Posterior cingulate gyrus (tissue), 11 donors: ENCODE measurements at regions of chr14 and their contacts with region 1.

Region 1: GRCh38 chr14:61461808-61462275 is 140.5 kb downstream of the PRKCH start:
- DNase-seq: no peak

Region 2: DNA sequence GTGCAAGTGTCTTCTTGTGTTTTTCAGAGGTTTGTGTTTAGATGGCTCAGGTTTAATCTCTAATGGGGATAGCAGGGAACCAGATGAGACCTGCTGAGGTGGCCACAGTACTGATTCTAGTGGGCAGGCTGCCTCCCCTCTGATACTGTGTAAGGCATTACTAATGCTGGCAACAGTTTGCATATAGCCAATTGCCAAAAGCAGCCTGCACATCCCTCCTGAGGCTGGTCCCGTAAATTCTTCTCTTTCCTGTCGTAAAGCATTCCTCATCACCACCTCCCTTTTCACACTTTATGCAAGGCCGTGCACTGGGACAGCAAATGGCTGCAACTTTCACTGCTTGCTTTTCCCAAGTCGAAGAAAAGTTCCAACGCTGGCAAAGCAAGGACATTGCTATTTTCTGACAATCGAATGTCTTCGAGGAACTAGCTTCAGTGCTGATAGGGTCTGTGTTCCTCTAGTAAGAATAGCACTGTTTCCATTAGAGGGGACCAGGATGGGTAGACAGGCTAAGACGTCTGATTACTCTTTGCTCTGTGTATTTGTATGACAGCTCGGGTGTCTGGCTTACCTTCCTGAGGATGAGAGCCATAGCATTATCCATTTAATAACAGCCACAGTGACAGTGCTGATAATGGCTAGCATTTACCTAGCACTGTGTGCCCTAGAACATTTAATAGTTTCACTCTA is 55.3 kb after region 1 on chr14:
- intact Hi-C with region 1: no loop called
- DNase-seq: no peak

Region 3: DNA sequence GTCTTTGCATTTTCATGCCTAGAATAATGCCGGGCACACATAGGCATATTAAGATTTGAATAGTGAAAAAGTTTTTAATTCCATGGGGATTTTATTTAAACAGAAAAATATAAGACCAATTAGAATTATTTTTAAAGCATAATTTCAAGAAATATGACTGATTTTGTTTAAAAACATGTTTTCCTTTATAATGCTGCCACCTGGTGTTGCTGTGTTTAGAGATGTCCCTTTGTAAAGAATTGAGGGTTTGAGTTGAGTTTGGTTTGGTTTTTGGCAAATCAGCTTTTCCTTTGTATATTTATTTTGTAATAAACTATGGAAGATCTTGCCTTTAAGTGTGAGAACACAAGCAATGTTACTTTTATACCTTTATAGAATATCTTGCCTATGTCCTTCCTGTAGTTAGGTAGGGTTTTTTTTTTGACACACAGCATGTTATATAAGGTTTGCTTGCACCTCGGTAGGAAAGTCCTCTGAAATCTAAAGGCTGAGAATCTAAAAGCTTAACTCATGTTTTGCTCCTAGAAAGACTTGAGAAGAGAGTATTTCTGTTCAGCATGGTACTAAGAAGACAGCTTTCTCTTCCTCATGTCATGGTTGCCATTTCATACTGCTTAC is 269.0 kb after region 1 on chr14:
- intact Hi-C with region 1: loop called (anchors 2 kb)
- DNase-seq: no peak

Region 4: DNA sequence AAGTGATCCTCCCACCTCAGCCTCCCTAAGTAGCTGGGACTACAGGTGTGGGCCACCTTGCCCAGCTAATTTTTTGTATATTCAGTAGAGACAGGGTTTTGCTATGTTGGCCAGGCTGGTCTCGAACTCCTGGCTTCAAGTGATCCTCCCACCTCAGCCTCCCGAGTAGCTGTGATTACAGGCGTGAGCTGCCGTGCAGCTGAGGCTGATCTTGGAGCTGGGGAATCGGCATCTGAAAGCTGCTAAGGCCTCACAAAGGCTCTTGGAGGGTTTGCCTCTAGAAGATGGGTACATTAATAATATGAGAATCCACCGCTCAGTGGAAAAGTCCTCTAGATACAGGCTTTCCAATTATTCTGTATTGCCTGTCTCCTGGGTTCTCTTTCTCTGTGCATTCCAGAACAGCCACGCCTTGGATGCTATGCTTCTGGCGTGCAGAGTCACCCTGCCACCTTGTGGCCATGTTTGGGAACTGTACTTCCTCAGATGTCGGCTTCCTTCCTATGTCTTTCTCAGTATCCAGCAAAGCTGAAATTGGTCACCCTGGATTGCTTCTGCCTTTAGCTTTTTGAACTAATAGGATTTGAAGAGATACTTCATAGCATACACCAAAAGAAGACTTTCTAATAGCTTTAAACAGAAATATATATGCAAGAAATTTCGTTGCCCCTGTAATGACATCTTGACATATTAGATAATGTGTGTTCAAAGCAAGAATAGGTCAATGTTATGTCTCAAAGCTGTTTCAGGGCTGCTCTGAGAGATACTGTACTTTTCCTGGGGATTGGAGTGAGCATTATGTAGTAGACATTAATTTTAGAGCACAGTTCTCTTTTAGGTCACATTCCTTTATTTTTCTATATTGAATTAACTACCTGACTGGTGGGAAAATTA is 375.7 kb after region 1 on chr14:
- intact Hi-C with region 1: loop called (anchors 1 kb)
- DNase-seq: peak; percentile 57 to 97 (median 81)

Region 5: DNA sequence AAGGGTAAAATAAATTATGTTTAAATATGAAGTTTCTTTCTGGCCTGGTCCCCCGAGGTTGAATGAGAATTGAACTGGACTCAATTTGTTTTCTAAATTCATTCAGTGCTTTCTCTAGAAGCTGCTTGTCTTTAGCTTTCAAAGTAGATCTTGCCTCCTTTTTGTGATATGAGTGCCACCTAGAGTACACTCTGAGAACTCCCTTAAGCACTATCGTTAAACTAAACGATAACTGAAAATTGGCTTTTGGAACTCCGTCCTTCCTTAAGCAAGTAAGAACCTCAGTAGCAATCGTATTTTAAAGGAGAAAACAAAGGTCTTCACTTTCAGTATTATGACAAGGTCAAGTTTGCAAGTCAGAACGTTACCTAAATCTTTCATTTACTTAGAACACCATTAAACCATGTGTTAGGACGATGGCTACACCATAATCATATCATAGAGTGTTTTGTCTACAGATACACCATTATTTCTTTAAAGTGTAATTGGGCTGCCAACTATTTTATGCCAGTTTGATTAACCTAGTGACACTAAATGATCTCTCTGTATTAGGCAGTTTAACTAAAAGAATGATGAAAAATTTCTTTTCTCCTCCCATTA is 665.1 kb after region 1 on chr14:
- intact Hi-C with region 1: loop called (anchors 5 kb)
- DNase-seq: no peak